GM10248 (cell line): ENCODE measurements at regions of chr20 and their contacts with region 1.

Region 1: GRCh38 chr20:45629496-45630100 is at the start of gene WFDC10A:
- DNase-seq: peak; percentile 53
- CTCF ChIP-seq: peak; percentile 50

Region 2: GRCh38 chr20:45617591-45617990 is 12.0 kb before region 1 on chr20:
- CTCF ChIA-PET with region 1: interaction called, 23 read pairs
- POLR2A ChIA-PET with region 1: no interaction called
- DNase-seq: no peak
- CTCF ChIP-seq: no peak